Psoas muscle (tissue), 8 donors: ENCODE measurements at regions of chr4 and their contacts with region 1.

Region 1: DNA sequence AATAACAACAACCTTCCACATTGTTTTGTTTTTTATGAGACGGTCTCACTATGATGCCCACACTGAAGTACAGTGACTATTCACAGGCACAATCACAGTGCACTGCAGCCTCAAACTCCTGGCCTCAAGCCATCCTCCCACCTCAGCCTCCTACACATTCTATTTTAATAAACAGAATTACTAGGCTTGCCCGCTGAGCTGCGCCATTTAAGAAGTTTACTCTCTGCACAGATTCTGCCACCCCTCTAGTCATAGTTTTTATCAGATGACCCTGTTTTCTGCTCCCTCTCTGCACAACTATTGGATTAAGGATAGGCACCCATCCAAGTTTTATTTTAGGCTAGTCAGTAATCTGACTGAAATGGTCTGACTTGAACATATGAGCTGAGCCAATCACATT is 11.3 kb upstream of the COX18 start:
- DNase-seq: no peak
- ATAC-seq: peak in 3 of 4 donors; percentile 38 to 62 (median 43)
- H3K4me3 ChIP-seq: no peak overlapping the region
- H3K27ac ChIP-seq: no peak overlapping the region
- H3K4me1 ChIP-seq: peaks cover 2% of the 10 kb centered on the region
- H3K27me3 ChIP-seq: no peaks in the 10 kb centered on the region
- CTCF ChIP-seq: no peak

Region 2: GRCh38 chr4:72525938-72526337 is 554.9 kb before region 1 on chr4:
- intact Hi-C with region 1: no loop called
- DNase-seq: peak; percentile 19 to 56
- ATAC-seq: peak in 3 of 4 donors; percentile 49 to 79 (median 64)
- H3K4me3 ChIP-seq: no peak overlapping the region
- H3K27ac ChIP-seq: no peak overlapping the region
- H3K4me1 ChIP-seq: no peaks in the 10 kb centered on the region
- H3K27me3 ChIP-seq: no peaks in the 10 kb centered on the region
- CTCF ChIP-seq: no peak

Region 3: DNA sequence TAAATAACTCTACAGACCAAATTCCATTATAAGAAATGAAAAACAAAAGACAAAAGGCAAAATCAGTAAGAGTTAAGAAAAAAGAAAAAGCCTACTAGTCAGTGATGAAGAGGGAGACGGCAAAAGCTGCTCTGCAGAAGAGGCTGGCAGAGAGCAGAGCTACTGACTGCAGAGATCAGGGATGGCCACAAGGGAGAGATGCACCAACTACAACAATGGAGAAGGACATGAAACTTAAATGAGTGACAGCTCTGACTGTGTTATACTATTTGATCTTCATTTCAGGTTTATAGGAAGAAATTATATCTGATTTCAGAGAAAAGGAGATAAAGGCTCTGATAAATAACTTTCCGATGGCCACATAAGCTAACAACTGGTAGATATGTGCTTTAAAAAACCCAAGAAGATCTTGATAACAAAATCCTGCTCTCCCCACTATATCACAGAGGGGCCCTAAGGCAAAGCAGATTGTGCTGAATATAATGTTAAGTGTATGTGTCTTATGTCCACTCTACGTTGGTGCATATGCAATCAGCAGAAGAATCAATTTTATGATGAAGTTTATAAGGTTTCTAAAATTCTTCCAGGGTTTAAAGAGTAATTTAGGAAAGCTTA is 47.2 kb after region 1 on chr4:
- intact Hi-C with region 1: loop called in 1 of 2 experiments (anchors 5 kb)
- DNase-seq: no peak
- ATAC-seq: peak; percentile 55 to 86 (median 79)
- H3K4me3 ChIP-seq: no peak overlapping the region
- H3K27ac ChIP-seq: no peak overlapping the region
- H3K4me1 ChIP-seq: no peaks in the 10 kb centered on the region
- H3K27me3 ChIP-seq: no peaks in the 10 kb centered on the region
- CTCF ChIP-seq: peak; percentile 32

Region 4: DNA sequence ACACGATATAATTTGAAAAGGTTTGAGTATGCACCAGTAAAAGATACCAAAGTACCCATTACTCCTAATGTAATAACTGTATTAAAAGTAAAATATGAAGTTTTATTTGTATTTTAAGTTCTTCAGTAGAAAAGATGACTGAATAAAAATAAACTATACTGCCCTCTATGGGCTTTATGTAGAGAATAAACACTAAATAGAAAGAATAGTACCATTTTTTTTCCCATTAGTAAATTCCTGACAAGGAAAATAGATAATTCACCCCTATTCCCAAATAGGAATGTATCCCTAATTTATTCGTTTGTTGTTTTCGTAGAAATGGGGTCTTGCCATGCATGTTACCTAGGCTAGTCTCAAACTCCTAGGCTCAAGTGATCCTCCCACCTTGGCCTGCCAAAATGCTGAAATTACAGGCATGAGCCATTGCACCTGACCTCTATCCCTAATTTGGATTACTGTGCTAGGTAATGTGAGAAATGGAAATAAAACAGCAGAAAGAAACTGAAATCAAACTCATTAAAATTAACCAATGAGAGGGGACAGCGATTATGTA is 62.3 kb after region 1 on chr4:
- intact Hi-C with region 1: no loop called
- DNase-seq: no peak
- ATAC-seq: no peak
- H3K4me3 ChIP-seq: no peak overlapping the region
- H3K27ac ChIP-seq: no peak overlapping the region
- H3K4me1 ChIP-seq: peaks cover 6% of the 10 kb centered on the region
- H3K27me3 ChIP-seq: no peaks in the 10 kb centered on the region
- CTCF ChIP-seq: peak; percentile 10

Region 5: DNA sequence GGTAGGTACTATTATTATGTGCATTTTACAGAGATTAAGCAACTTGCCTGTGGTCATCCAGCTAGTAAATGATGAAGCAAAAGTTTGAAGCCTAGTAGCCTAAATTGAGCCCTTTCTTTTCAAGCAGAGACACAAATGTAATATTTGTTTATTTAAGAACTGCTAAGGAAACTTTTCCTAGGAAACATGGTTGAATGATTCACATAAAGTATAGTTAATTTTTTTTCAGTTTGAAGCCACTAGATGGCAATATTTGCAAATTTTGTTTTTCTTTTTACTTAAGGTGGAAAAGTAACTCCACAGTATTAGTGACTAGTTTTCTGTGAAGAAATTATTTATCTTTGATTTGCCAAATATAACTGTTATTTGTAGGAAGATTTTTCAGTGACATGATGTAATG is 230.6 kb after region 1 on chr4:
- intact Hi-C with region 1: no loop called
- DNase-seq: no peak
- ATAC-seq: no peak
- H3K4me3 ChIP-seq: no peak overlapping the region
- H3K27ac ChIP-seq: no peak overlapping the region
- H3K4me1 ChIP-seq: no peaks in the 10 kb centered on the region
- H3K27me3 ChIP-seq: no peaks in the 10 kb centered on the region
- CTCF ChIP-seq: peak; percentile 27